Cardiac septum (tissue), 1 donor: ENCODE measurements at regions of chr7 and their contacts with region 1.

Region 1: DNA sequence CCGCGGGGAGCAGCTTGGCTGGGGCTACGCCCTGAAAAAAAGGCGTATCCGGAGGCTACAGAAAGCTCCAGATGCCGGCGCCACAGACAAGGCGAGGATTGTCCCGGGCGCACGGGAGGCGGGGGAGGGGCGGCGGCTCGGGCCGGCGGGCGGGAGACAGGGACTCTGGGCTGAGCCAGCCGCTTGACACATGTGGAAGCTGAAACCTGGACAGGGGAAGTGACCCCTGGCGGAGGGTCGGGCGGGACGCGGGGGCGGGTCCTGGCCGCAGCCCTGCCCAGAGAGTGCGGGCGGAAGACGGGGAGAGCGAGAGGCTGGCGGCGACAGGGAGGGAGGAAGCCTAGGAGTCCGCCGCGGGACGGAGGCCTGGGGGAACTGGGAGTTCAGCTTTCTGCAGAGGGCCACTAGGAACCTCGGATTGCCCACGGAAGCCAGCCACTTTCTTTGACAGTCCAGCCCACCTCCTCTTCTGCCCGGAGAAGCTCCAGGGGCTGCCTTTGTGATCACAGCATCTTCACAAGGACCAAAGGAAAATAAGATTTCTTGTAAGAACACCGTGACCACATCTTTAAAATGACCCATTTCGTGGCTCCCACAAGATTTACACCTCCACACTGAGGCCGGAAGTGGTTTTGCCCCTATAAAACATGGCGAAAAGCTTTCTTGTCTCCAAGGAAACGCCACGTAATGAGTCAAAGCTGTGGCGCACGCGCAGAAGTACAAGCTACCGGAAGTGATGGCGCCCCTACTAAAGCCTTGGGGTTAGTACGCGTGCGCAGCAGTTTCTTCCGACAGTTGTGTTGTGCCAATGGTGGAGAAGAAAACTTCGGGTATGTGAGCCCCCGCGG is at the starts of genes PLOD3 and ZNHIT1:
- DNase-seq: peak; percentile 96
- total RNA-seq, gene PLOD3: 43.9 TPM
- total RNA-seq, gene ZNHIT1: 50.1 TPM

Region 2: DNA sequence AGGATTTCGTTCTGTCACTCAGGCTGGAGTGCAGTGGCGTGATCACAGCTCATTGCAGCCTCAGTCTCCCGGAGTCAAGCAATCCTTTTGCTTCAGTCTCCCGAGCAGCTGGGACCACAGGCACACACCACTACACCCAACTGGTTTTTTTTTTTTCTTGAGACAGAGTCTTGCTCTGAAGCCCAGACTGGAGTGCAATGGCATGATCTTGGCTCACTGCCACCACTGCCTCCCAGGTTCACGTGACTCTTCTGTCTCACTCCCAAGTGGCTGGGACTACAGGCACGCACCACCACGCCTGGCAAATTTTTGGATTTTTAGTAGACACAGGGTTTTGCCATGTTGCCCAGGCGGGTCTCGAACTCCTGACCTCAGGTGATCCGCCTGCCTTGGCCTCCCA is 555.2 kb before region 1 on chr7:
- intact Hi-C with region 1: no loop called
- DNase-seq: no peak

Region 3: DNA sequence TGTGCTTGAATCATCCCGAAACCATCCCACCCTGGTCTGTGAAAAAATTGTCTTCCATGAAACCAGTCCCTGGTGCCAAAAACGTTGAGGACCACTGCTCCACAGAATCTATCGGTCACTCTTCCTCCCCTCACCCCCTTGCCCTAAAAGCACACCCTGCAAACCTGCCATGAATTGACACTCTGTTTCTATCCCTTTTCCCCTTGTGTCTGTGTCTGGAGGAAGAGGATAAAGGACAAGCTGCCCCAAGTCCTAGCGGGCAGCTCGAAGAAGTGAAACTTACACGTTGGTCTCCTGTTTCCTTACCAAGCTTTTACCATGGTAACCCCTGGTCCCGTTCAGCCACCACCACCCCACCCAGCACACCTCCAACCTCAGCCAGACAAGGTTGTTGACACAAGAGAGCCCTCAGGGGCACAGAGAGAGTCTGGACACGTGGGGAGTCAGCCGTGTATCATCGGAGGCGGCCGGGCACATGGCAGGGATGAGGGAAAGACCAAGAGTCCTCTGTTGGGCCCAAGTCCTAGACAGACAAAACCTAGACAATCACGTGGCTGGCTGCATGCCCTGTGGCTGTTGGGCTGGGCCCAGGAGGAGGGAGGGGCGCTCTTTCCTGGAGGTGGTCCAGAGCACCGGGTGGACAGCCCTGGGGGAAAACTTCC is 91.5 kb before region 1 on chr7:
- intact Hi-C with region 1: no loop called
- DNase-seq: peak; percentile 83

Region 4: GRCh38 chr7:101251871-101252659 is 34.5 kb after region 1 on chr7:
- intact Hi-C with region 1: loop called (anchors 5 kb)
- DNase-seq: peak; percentile 99